ENCODE measurements at regions of chr10 and their contacts with region 1.

Region 1: DNA sequence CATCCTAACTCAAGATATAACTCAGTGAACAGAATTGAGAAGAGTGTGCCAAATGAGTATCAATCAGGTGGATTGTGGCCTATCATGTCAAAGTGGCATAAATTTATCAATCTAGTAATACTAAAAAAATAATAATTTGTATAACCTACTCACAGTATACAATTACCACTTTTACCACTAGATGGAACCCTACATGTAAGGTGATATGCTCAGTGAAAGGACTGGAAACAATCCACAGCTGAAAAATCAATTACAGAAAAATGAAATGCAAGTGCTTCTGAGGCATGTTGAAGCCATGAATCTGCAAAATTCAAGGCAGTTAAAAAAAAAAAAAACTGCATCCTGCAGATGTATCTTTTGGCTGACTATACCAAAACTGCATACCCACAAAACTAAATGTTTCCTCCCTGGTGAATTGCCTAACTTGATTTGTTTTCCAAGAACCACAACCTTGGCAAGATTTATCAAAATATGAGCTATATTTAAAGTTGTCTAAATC is 13.9 kb downstream of the ARHGAP19 start:
- DNase-seq: peak in 3 of 14 experiments; percentile 65 to 72 (median 70)
- ATAC-seq: peak; percentile 85
- H3K4me3 ChIP-seq: no peak overlapping the region
- H3K4me3 Mint-ChIP-seq: no peak overlapping the region
- H3K27ac ChIP-seq: no peak overlapping the region
- H3K27ac Mint-ChIP-seq: peak overlapping the region; percentile 25
- H3K4me1 ChIP-seq: no peaks in the 10 kb centered on the region
- H3K4me1 Mint-ChIP-seq: peaks cover 6% of the 10 kb centered on the region
- H3K27me3 ChIP-seq: no peaks in the 10 kb centered on the region
- H3K27me3 Mint-ChIP-seq: no peaks in the 10 kb centered on the region
- CTCF ChIP-seq: peak; percentile 76

Region 2: GRCh38 chr10:97292097-97292862 is 13.7 kb after region 1 on chr10 and contains the start of gene ARHGAP19:
- CTCF ChIA-PET with region 1: interaction called, 11 read pairs
- POLR2A ChIA-PET with region 1: interaction called, 6 read pairs
- intact Hi-C with region 1: no loop called
- DNase-seq: peak; percentile 86 to 97 (median 90)
- ATAC-seq: peak; percentile 99
- H3K4me3 ChIP-seq: peak within 1 kb of the TSS; percentile 72
- H3K4me3 Mint-ChIP-seq: peak within 1 kb of the TSS; percentile 95
- H3K27ac ChIP-seq: peak within 1 kb of the TSS; percentile 49 to 65
- H3K27ac Mint-ChIP-seq: peak within 1 kb of the TSS; percentile 50
- H3K4me1 ChIP-seq: peaks cover 13% of the 10 kb centered on the region
- H3K4me1 Mint-ChIP-seq: peaks cover 18% of the 10 kb centered on the region
- H3K27me3 ChIP-seq: no peaks in the 10 kb centered on the region
- H3K27me3 Mint-ChIP-seq: no peaks in the 10 kb centered on the region
- CTCF ChIP-seq: no peak
- total RNA-seq, gene ARHGAP19: 6.9 to 8.8 TPM

Region 3: DNA sequence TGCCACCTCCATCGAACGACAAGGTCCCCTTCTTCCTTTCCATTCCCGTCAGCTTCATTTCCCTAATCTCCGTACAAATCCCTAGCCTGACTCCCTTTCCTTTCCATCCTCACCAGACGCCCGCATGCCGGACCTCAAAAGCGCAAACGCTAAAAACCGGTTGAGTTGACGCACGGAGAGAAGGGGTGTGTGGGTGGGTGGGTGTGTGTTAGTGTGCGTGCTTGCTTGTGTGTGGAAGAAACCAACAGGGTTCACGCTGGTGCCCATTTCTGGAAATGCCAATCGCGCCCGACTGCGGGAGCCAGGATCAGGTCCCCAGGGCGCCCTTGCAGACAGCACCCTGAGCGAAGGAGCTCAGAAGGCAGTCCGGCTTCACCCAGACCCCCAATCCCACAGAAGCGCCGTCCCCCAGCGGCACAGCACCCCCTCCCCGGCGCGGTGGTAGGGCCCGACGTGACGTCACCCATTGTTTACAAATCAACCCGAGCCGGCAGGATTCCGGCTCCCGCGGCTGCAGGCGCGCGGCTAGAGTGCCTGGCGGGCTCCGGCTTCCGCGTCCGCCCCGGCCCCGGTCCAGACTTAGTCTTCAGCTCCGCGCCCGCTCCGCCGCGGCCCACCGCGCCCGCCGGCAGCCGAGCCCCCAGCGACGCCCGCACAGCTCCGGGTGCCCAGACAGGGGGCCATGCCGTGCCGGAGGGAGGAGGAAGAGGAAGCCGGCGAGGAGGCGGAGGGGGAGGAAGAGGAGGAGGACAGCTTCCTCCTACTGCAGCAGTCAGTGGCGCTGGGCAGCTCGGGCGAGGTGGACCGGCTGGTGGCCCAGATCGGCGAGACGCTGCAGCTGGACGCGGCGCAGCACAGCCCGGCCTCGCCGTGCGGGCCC is 40.5 kb after region 1 on chr10 and contains the start of gene FRAT1:
- CTCF ChIA-PET with region 1: interaction called, 10 read pairs
- POLR2A ChIA-PET with region 1: interaction called, 12 read pairs
- intact Hi-C with region 1: no loop called
- DNase-seq: peak; percentile 85 to 96 (median 89)
- ATAC-seq: peak; percentile 73
- H3K4me3 ChIP-seq: peak within 1 kb of the TSS; percentile 80
- H3K4me3 Mint-ChIP-seq: peak within 1 kb of the TSS; percentile 97
- H3K27ac ChIP-seq: peak within 1 kb of the TSS; percentile 99 to 100
- H3K27ac Mint-ChIP-seq: peak within 1 kb of the TSS; percentile 98
- H3K4me1 ChIP-seq: peaks cover 36% of the 10 kb centered on the region
- H3K4me1 Mint-ChIP-seq: peaks cover 38% of the 10 kb centered on the region
- H3K27me3 ChIP-seq: no peaks in the 10 kb centered on the region
- H3K27me3 Mint-ChIP-seq: no peaks in the 10 kb centered on the region
- CTCF ChIP-seq: no peak
- total RNA-seq, gene FRAT1: 45.2 to 45.5 TPM

Region 4: DNA sequence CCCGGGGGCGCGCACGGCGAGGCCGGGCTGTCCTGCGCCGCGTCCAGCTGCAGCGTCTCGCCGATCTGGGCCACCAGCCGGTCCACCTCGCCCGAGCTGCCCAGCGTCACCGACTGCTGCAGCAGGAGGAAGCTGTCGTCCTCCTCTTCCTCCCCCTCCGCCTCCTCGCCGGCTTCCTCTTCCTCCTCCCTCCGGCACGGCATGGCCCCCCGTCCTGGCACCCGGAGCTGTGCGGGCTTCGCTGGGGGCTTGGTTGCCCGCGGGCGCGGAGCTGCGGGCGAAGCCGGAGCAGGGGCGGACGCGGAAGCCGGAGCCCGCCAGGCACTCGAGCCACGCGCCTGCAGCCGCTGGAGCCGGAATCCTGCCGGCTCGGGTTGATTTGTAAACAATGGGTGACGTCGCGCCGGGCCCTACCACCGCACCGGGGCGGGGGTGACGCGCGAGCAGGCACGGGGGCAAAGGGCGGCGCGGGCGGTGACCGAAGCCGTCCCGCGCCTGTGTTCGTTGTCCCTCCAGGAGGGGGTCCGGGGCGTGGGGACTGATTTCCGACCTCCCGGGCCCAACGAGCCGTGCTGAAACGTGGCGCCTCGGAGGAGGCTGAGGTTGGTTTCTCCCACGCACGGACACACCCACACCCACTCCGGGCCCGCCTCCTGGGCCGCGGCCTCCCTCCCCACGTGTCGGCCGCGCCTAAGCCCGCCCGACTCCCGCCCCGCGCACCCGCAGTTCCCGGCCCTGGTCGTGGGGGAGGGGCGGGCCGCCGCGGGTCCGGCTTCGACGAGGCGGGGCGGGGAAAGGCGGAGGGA is 56.0 kb after region 1 on chr10 and contains the start of gene FRAT2:
- CTCF ChIA-PET with region 1: interaction called, 7 read pairs
- POLR2A ChIA-PET with region 1: interaction called, 11 read pairs
- intact Hi-C with region 1: loop called (anchors 2 kb)
- DNase-seq: peak; percentile 78 to 95 (median 85)
- ATAC-seq: peak; percentile 88
- H3K4me3 ChIP-seq: peak within 1 kb of the TSS; percentile 76
- H3K4me3 Mint-ChIP-seq: peak within 1 kb of the TSS; percentile 96
- H3K27ac ChIP-seq: peak within 1 kb of the TSS; percentile 97
- H3K27ac Mint-ChIP-seq: peak within 1 kb of the TSS; percentile 91
- H3K4me1 ChIP-seq: peaks cover 43% of the 10 kb centered on the region
- H3K4me1 Mint-ChIP-seq: peaks cover 50% of the 10 kb centered on the region
- H3K27me3 ChIP-seq: no peaks in the 10 kb centered on the region
- H3K27me3 Mint-ChIP-seq: peaks cover 3% of the 10 kb centered on the region
- CTCF ChIP-seq: no peak
- total RNA-seq, gene FRAT2: 27.0 to 27.6 TPM

Region 5: GRCh38 chr10:97355571-97355975 is 77.0 kb after region 1 on chr10:
- CTCF ChIA-PET with region 1: interaction called, 20 read pairs
- POLR2A ChIA-PET with region 1: no interaction called
- intact Hi-C with region 1: loop called (anchors 2 kb)
- DNase-seq: peak in 7 of 14 experiments; percentile 9 to 59 (median 35)
- ATAC-seq: peak; percentile 43
- H3K4me3 ChIP-seq: no peak overlapping the region
- H3K4me3 Mint-ChIP-seq: no peak overlapping the region
- H3K27ac ChIP-seq: no peak overlapping the region
- H3K27ac Mint-ChIP-seq: no peak overlapping the region
- H3K4me1 ChIP-seq: peaks cover 3% of the 10 kb centered on the region
- H3K4me1 Mint-ChIP-seq: no peaks in the 10 kb centered on the region
- H3K27me3 ChIP-seq: no peaks in the 10 kb centered on the region
- H3K27me3 Mint-ChIP-seq: no peaks in the 10 kb centered on the region
- CTCF ChIP-seq: peak; percentile 53

Region 6: DNA sequence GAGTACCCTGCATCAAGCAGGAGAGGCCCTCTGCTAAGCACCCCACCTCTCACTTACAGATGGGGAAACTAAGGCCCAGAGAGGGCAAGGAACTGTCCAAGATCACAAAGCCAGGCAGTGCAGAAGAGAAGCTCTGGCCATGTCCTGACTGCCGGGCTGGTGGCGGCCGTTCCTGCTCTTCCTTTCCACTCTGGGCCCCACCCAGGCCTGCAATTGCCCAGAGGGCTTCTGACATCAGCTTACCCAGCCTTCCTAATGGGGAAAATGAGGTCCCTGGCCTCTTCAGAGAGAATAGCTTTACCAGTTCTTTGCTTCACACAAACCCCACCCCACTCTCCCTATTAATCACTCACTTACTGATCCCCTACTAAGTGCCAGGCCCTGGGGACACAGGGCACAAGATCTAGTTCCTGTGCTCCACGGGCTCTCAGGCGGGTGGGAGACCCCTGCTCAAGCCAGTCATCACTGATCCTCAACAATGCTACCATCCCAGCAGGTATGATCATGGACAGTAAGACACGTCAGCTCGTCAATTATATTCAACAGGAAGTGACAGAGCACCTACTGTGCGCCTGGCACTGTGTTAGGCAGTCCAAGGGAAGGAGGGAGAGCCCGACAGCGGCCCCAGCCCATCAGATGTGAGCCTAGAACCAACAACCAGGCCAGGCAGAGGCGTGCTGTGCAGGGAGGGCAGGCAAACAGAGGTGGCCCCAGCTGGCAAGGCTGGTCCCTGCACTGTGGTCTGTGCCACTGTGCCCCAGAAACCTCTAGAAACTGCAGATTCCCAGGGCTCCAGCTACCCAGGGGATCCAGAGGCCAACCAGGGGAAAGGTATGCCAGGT is 82.4 kb after region 1 on chr10:
- CTCF ChIA-PET with region 1: interaction called, 20 read pairs
- POLR2A ChIA-PET with region 1: no interaction called
- intact Hi-C with region 1: no loop called
- DNase-seq: no peak
- ATAC-seq: no peak
- H3K4me3 ChIP-seq: no peak overlapping the region
- H3K4me3 Mint-ChIP-seq: no peak overlapping the region
- H3K27ac ChIP-seq: no peak overlapping the region
- H3K27ac Mint-ChIP-seq: no peak overlapping the region
- H3K4me1 ChIP-seq: peaks cover 3% of the 10 kb centered on the region
- H3K4me1 Mint-ChIP-seq: no peaks in the 10 kb centered on the region
- H3K27me3 ChIP-seq: no peaks in the 10 kb centered on the region
- H3K27me3 Mint-ChIP-seq: no peaks in the 10 kb centered on the region
- CTCF ChIP-seq: no peak